ENCODE measurements at regions of chr11 and their contacts with region 1.

Region 1: DNA sequence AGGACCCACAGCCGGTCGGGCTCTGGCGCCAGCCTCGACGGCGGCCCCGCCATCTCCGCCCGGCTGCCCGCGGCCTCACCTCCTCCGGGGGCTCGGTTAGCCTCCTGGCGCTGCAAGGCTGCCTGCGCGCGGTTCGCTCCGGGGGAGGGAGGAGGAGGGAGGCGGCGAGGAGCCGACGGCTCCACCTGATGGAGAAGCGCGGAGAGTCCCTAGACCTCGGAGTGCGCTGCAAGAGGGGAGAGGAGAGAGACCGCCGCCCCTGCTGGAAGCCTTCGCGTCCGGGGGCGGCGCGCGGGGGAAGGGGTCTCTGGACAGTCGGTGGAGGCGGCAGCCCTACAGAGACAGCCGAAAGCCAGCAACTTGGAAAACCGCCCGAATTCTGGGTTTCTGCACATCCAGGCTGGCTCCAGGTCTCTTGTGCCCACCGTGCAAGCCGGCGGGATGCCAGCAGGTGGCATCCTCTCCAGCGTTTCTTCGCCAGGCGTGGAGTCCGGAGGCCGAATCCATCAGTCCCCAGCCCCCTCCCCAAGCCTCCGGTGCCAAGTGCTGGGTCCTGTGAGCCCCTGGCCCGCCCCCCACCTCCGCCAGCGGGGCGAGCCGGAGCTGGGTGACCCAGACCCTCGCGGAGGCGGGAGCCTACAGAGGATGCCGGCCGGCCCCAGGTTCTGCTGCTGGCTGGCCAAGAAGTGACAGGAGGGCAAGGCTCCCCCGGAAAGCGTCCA is 2.9 kb upstream of the KIRREL3 start:
- DNase-seq: no peak
- ATAC-seq: no peak
- H3K4me3 ChIP-seq: no peak overlapping the region
- H3K4me3 Mint-ChIP-seq: no peak overlapping the region
- H3K27ac ChIP-seq: no peak overlapping the region
- H3K27ac Mint-ChIP-seq: no peak overlapping the region
- H3K4me1 ChIP-seq: peaks cover 0 to 7% of the 10 kb centered on the region in 2 experiments
- H3K4me1 Mint-ChIP-seq: no peaks in the 10 kb centered on the region
- H3K27me3 ChIP-seq: peaks cover 13 to 36% of the 10 kb centered on the region in 2 experiments
- H3K27me3 Mint-ChIP-seq: peaks cover 30 to 37% of the 10 kb centered on the region in 2 donors

Region 2: GRCh38 chr11:125410091-125410490 is 1593.3 kb before region 1 on chr11:
- CTCF ChIA-PET with region 1: interaction called in 1 of 2 experiments, 12 read pairs
- POLR2A ChIA-PET with region 1: no interaction called
- DNase-seq: no peak
- ATAC-seq: no peak
- H3K4me3 ChIP-seq: no peak overlapping the region
- H3K4me3 Mint-ChIP-seq: no peak overlapping the region
- H3K27ac ChIP-seq: no peak overlapping the region
- H3K27ac Mint-ChIP-seq: no peak overlapping the region
- H3K4me1 ChIP-seq: peaks cover 0 to 2% of the 10 kb centered on the region in 2 experiments
- H3K4me1 Mint-ChIP-seq: peaks cover 0 to 5% (median 2%) of the 10 kb centered on the region in 3 donors
- H3K27me3 ChIP-seq: peaks cover 0 to 54% of the 10 kb centered on the region in 2 experiments
- H3K27me3 Mint-ChIP-seq: peaks cover 32 to 41% of the 10 kb centered on the region in 2 donors

Measured in T-cell (primary cell).